Motor neuron (in vitro differentiated cells): ENCODE measurements at regions of chr11 and their contacts with region 1.

Region 1: DNA sequence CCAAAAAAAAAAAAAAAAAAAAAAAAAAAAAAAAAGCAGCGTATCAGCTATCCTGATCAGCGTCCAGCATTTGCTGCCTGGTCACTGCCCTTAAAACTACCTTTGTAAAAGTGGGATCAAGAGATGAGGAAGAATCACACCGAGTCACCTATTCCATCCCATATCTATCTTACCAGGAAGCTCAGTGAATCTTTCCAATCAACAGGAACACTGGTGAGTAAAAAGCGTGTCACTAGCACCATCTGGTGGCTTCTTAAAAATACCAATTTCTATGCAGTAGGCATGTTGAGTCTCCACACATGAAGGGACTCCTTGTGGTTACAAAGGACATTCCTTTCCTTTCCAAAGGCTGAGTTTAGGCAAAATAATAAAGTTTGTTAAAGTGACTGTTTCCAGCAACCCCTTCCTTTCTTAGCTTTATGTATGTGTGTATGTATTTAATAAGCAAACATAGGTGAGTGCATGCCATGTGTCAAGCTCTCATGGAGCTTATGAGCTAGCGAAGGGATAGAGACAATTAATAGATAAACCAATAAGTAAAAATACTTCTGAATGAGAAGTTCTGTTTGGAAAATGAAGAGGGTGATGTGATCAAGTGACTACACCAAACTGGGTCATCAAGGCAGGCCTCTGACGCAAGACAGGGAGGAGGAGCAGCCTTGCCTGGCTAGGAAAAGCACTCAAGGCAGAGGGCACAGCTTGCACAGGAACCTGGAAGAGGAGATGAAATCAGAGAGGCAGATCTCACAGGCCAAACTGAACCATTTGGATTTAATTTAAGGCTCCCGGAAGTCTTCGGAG is 13.9 kb upstream of the TP53AIP1 start:
- ATAC-seq: peak; percentile 70 to 91 (median 87)
- H3K4me3 ChIP-seq: no peak overlapping the region
- H3K27ac ChIP-seq: no peak overlapping the region
- H3K4me1 ChIP-seq: no peaks in the 10 kb centered on the region

Region 2: GRCh38 chr11:128039140-128040021 is 917.2 kb before region 1 on chr11:
- in situ Hi-C with region 1: loop called in 1 of 9 experiments (anchors 25 kb)
- ATAC-seq: peak in 3 of 8 experiments; percentile 49 to 100 (median 100)
- H3K4me3 ChIP-seq: no peak overlapping the region
- H3K27ac ChIP-seq: no peak overlapping the region
- H3K4me1 ChIP-seq: peaks cover 4 to 5% of the 10 kb centered on the region in 2 donors

Region 3: DNA sequence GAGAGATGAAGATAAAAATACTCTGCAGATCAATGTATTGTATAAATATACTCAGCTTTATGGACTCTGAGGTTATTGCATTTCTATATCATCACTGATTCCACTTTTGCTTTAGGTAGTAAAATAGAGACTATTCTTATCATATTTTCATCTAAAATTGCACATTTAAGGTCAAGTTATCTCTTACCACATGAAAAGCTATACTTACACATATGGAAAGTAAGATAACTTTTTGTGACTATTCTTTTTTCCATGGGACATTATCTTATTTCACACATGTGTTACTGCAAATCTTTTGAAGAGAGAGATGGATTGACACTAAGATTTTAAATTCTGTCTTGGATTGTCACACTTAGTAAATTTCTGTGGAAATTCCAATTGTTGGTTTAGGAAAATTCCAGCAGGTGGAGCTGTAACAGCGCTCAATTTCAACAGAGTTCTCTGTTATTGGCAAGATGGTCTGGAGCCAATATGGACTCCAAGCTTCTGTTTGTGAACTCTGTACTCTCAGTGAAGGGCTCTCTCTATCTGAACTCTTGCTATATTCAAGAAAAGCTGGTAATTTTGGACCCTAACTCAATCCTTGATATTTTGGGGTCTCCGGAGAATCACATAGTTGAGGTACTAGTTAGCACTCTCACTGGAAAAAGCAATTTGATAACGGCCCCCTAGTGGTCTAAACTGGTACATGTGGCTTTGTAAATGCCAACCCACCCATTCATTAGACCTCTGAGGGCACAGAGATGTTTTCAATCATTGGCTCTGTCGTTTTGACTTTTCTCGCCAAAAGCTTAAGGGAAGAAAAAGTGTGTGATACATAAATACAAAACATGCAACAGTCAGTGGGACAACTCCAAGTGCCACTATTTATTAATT is 798.9 kb before region 1 on chr11:
- in situ Hi-C with region 1: loop called in 1 of 9 experiments (anchors 25 kb)
- ATAC-seq: peak in 5 of 8 experiments; percentile 38 to 90 (median 85)
- H3K4me3 ChIP-seq: no peak overlapping the region
- H3K27ac ChIP-seq: no peak overlapping the region
- H3K4me1 ChIP-seq: peaks cover 0 to 7% of the 10 kb centered on the region in 2 donors

Region 4: DNA sequence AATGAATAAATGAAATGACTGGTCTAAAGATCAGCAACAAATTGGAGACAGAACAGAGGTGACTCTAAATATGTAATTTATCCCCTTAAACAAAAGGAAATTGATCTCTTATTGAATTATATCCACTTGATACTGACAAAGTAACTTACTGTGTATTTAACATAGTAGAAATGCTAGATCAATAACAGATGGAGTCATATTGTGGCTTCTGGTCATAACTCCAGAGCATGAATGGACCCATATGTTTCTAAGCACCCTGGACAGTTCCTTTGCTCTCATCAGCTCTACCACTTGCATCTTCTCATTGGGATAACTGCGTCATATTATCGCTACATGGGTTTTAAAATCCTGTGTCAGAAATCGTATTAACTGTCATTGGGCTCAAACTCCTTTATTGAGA is 591.6 kb before region 1 on chr11:
- in situ Hi-C with region 1: no loop called
- ATAC-seq: peak in 4 of 8 experiments; percentile 13 to 64 (median 53)
- H3K4me3 ChIP-seq: no peak overlapping the region
- H3K27ac ChIP-seq: no peak overlapping the region
- H3K4me1 ChIP-seq: peaks cover 7 to 25% of the 10 kb centered on the region in 2 donors

Region 5: GRCh38 chr11:128879817-128880216 is 76.8 kb before region 1 on chr11:
- in situ Hi-C with region 1: loop called in 7 of 9 experiments (anchors 5 to 10 kb)
- ATAC-seq: peak in 6 of 8 experiments; percentile 32 to 82 (median 56)
- H3K4me3 ChIP-seq: no peak overlapping the region
- H3K27ac ChIP-seq: no peak overlapping the region
- H3K4me1 ChIP-seq: peaks cover 0 to 6% of the 10 kb centered on the region in 2 donors

Region 6: DNA sequence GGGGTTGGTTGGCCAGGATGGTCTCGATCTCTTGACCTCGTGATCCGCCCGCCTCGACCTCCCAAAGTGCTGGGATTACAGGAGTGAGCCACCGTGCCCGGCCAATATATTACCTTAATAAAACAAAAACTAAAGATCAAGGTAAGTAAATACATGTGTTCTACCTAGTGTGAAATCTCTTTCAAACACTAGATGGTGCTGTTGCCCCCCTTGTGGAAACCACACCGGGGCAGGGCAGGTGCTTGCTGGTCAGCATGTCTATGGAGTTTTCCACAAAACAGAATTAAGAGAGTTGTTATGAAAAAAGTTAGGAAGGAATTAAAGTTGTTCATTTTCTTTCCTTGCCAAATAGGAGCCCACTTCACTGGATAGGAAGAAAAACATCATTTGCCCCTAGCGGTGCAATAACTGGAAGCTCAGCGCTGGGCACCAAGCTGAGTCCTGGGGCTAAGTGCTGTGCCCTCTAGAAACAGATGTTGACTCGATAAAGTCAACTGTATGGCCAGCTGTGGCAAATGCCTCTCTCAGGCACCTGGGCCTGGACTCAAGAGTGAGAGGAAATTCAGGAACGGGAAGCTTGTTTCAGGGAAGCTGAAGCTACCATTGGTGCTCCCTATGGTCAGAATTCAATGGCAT is 71.8 kb before region 1 on chr11:
- in situ Hi-C with region 1: loop called in 7 of 9 experiments (anchors 5 to 10 kb)
- ATAC-seq: peak; percentile 76 to 94 (median 82)
- H3K4me3 ChIP-seq: no peak overlapping the region
- H3K27ac ChIP-seq: no peak overlapping the region
- H3K4me1 ChIP-seq: peaks cover 18 to 20% of the 10 kb centered on the region in 2 donors

Region 7: GRCh38 chr11:129155745-129156144 is 199.1 kb after region 1 on chr11:
- in situ Hi-C with region 1: no loop called
- ATAC-seq: no peak
- H3K4me3 ChIP-seq: no peak overlapping the region
- H3K27ac ChIP-seq: no peak overlapping the region
- H3K4me1 ChIP-seq: no peaks in the 10 kb centered on the region

Region 8: DNA sequence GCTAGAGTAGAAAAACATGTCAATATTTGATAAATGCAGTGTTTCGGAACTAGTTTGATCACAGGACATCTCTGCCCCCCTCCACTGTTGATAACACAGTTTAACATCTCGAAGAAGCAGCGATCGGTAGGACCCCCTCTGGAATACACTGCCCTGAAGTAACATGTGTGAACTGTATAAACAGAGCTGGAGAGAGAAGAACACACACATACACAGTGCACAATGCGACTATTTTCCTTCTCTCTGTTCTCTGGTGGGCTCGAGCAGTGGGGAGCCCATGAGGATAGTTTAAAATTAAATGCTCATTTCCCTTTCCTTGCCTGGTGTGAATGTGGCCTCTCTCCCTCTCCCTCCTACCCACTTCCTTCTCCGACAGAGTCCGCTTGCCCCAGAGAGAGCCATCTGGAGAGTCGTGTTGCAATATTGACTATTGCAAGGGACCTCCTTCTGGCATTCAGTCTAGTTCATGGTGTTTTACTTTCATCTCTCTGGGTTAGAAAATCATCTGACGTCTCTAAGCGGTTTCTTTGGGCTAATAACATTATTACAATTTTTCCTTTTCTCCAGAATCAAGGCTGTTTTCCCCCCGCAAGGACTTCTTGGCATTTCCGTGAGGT is 367.4 kb after region 1 on chr11:
- in situ Hi-C with region 1: loop called in 1 of 9 experiments (anchors 25 kb)
- ATAC-seq: peak in 7 of 8 experiments; percentile 23 to 79 (median 68)
- H3K4me3 ChIP-seq: no peak overlapping the region
- H3K27ac ChIP-seq: no peak overlapping the region
- H3K4me1 ChIP-seq: peaks cover 11 to 14% of the 10 kb centered on the region in 2 donors